Lower leg skin (tissue), 4 donors: ENCODE measurements at regions of chr17 and their contacts with region 1.

Region 1: DNA sequence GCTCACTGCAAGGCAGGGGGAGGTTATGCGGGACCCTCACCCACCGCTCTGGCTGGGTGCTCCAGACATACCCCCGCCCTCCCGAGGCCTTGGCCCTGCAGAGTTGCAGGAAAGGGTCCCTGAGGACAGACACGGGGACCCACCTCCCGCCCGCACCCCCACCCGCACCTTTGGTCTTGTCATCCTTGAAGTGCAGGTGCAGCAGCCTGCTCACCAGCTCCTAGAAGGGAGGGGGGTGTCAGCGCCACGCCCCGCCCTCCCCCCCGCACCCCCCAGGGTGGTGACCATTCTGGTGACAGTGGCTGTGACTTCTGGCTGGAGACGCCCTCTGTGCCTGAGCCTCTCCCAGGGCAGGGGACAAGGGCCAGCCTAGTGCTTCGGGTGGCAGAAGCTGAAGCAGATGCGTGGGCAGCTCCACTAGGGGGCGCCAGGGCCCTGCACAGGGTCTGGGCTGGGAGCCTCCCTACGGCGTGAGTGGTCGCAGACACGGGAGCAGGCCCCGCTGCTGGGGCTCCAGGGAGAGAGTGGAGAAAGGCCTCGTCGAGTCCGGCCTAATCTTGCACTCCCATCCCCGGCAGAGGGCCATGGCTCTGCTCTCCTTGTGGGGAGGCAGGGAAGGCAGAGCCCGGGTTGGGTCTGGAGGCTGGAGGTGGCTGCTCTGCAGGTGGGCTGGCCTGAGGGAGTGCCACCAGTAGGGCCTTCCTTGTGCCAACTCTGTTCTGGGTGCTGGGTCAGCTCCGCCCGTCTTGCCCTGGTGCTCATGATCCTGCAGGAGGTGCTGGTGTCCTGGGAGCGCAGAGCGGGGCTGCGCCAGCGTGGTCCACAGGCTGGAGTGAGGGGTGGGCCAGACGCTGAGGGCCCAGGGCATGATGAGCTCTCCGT is 2.7 kb downstream of the CENPX start:
- DNase-seq: no peak
- H3K4me3 ChIP-seq: no peak overlapping the region
- CTCF ChIP-seq: no peak
- POLR2A ChIP-seq: no peak

Region 2: GRCh38 chr17:81961521-81962498 is 58.1 kb before region 1 on chr17:
- intact Hi-C with region 1: loop called (anchors 2 kb)
- DNase-seq: no peak
- H3K4me3 ChIP-seq: no peak overlapping the region
- CTCF ChIP-seq: no peak
- POLR2A ChIP-seq: no peak